Sigmoid colon (tissue), 7 donors: ENCODE measurements at regions of chr2 and their contacts with region 1.

Region 1: GRCh38 chr2:200306196-200306930 is at the start of gene SPATS2L:
- DNase-seq: peak; percentile 93
- H3K4me3 ChIP-seq: peak within 1 kb of the TSS; percentile 77 to 98 (median 90)
- H3K27ac ChIP-seq: peak within 1 kb of the TSS; percentile 92 to 95 (median 93)
- H3K4me1 ChIP-seq: peaks cover 0 to 42% (median 26%) of the 10 kb centered on the region in 4 donors
- H3K27me3 ChIP-seq: no peaks in the 10 kb centered on the region
- CTCF ChIP-seq: no peak
- EP300 ChIP-seq: no peak
- POLR2A ChIP-seq: peak; percentile 35 to 40
- total RNA-seq, gene SPATS2L: 63.5 to 153 (median 89.0) TPM

Region 2: DNA sequence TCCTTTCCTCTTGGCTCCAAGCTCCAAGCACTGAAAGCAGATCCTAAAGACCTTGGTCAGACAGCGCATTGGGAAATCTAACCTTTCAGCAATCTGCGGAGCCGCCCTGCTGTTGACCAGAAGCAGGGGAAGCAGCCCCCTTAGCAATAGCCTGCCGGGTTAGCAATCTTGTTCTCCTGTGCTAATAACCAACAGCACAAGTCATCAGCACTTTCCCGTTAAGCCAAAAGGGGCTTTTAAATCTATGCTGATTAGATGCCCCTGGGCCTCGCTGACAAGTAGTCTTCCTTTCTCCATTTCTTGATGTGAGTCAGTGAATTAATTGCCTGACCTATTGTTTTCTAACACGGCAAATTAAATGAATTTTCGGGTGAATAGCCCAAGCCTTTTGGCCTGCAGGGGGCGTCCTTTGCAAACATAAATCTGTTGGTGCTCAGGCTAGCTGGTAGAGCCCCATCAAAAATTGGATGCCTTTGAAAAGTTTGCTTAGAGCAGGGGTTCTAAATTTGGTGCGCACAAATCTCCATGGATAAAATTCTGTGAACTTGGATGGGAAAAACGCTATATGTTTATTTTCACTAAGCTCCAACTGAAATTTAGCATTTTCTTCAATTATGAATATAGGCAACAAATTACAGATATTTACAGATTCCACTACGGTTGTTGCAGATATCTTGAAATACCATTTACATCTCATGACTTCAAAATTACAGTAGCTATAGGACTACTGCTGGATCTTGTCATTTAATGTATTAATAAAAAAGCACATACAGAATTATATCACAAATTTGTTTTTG is 326.3 kb before region 1 on chr2:
- intact Hi-C with region 1: loop called (anchors 5 kb)
- DNase-seq: peak; percentile 87
- H3K4me3 ChIP-seq: peak overlapping the region in 2 of 4 donors; percentile 11 to 21
- H3K27ac ChIP-seq: no peak overlapping the region
- H3K4me1 ChIP-seq: peaks cover 0 to 7% (median 6%) of the 10 kb centered on the region in 4 donors
- H3K27me3 ChIP-seq: no peaks in the 10 kb centered on the region
- CTCF ChIP-seq: peak; percentile 64 to 83 (median 79)
- EP300 ChIP-seq: no peak
- POLR2A ChIP-seq: no peak

Region 3: GRCh38 chr2:200345975-200346374 is 39.6 kb after region 1 on chr2:
- intact Hi-C with region 1: loop called (anchors 5 kb)
- DNase-seq: no peak
- H3K4me3 ChIP-seq: no peak overlapping the region
- H3K27ac ChIP-seq: peak overlapping the region in 2 of 4 donors; percentile 31 to 38
- H3K4me1 ChIP-seq: peaks cover 0 to 50% (median 33%) of the 10 kb centered on the region in 4 donors
- H3K27me3 ChIP-seq: no peaks in the 10 kb centered on the region
- CTCF ChIP-seq: no peak
- EP300 ChIP-seq: no peak
- POLR2A ChIP-seq: no peak

Region 4: GRCh38 chr2:200360364-200360763 is 54.0 kb after region 1 on chr2:
- intact Hi-C with region 1: loop called (anchors 5 kb)
- DNase-seq: no peak
- H3K4me3 ChIP-seq: no peak overlapping the region
- H3K27ac ChIP-seq: peak overlapping the region in 1 of 4 donors; percentile 6
- H3K4me1 ChIP-seq: peaks cover 0 to 59% (median 52%) of the 10 kb centered on the region in 4 donors
- H3K27me3 ChIP-seq: no peaks in the 10 kb centered on the region
- CTCF ChIP-seq: no peak
- EP300 ChIP-seq: no peak
- POLR2A ChIP-seq: no peak

Region 5: DNA sequence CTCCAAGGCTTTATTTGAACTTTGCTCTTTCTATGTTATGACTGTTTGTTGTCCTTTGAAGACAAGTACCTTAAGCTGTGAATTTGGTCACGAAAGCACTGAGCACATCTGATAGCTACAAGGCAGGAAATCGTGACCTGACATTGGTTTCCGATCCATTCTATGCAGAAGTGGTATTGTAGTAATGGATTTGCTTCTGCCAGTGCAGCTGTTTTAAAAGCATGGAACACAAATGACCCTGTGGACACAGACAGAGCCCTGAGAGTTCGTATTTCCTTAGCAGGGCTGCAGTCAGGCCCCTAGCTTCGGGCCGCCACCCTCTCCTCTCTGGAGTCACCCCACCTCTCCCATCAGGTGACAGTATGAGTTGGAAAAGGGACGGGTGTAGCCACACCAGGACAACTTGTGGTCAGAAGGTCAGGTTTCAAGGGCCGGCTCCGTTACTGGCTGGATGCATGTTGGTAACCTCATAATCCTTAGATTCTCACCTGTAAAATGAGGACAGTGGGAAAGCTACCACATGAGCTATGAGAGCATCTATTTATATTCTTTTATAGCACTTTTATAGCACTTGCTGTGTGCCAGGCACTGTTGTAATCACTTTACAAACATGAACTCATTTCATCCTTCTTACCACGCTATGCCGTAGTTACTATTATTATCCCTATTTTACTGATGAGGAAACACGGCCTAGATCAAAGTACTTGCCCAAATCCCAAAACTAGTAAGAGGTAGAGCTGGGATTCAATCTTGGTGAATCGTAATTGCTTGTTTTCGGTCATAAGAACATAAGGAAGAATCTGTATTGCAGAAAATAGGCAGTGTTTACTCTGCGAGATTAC is 70.4 kb after region 1 on chr2:
- intact Hi-C with region 1: loop called (anchors 5 kb)
- DNase-seq: no peak
- H3K4me3 ChIP-seq: no peak overlapping the region
- H3K27ac ChIP-seq: peak overlapping the region; percentile 2 to 72 (median 62)
- H3K4me1 ChIP-seq: peaks cover 0 to 73% (median 56%) of the 10 kb centered on the region in 4 donors
- H3K27me3 ChIP-seq: no peaks in the 10 kb centered on the region
- CTCF ChIP-seq: no peak
- EP300 ChIP-seq: peak in 3 of 4 donors; percentile 59 to 85 (median 62)
- POLR2A ChIP-seq: no peak

Region 6: GRCh38 chr2:200483729-200484198 is 177.4 kb after region 1 on chr2:
- intact Hi-C with region 1: loop called (anchors 5 kb)
- DNase-seq: no peak
- H3K4me3 ChIP-seq: no peak overlapping the region
- H3K27ac ChIP-seq: no peak overlapping the region
- H3K4me1 ChIP-seq: peaks cover 0 to 29% (median 19%) of the 10 kb centered on the region in 4 donors
- H3K27me3 ChIP-seq: no peaks in the 10 kb centered on the region
- CTCF ChIP-seq: peak in 1 of 4 experiments; percentile 17
- EP300 ChIP-seq: no peak
- POLR2A ChIP-seq: no peak